Right ventricle myocardium inferior (tissue), 1 donor: ENCODE measurements at regions of chr19 and their contacts with region 1.

Region 1: DNA sequence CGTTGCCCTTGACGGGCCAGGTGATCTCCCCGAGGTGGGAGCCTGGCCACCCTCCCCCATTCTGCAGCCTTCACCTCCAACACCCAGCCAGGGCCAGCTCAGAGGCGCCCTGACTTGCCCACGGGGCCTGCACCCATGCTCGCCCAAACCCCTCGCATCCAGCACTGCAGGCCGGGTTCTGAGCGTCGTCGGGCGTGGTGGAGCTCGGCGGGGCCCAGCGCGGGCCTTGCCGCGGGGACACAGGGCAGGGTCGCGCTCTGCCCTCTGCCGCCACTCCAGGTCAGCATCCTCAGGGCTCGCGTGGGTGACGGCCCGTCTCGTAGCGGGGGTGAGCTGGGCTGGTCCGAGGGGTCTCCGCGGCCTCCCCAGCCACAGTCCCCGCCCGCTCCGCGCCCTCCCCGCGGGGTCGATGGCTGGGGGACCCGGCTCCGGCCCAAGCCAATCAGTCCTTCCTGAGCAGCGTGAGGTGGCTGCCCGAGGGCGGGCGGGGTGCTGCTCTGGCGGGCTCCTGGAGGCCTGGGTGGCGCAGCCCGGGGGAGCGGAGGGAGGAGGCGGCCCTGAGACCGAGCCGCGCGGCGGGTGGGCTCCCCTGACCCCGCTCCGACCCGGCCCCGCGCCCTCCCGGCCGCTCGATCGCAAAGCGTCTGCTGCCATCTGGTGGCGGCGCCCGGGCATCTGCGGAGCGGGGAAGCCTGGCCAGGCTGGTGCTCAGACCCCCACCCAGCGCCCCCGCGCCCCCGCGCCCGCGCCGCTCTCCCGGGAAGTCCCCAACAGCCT is 61.4 kb downstream of the CCNE1 start:
- DNase-seq: peak; percentile 79
- ATAC-seq: peak; percentile 78

Region 2: GRCh38 chr19:29735800-29736199 is 137.4 kb before region 1 on chr19:
- intact Hi-C with region 1: loop called (anchors 2 kb)
- DNase-seq: no peak
- ATAC-seq: no peak

Region 3: GRCh38 chr19:29771708-29772414 is 101.4 kb before region 1 on chr19:
- intact Hi-C with region 1: loop called (anchors 1 kb)
- DNase-seq: peak; percentile 45
- ATAC-seq: peak; percentile 56